SK-N-SH (cell line): ENCODE measurements at regions of chr21 and their contacts with region 1.

Region 1: DNA sequence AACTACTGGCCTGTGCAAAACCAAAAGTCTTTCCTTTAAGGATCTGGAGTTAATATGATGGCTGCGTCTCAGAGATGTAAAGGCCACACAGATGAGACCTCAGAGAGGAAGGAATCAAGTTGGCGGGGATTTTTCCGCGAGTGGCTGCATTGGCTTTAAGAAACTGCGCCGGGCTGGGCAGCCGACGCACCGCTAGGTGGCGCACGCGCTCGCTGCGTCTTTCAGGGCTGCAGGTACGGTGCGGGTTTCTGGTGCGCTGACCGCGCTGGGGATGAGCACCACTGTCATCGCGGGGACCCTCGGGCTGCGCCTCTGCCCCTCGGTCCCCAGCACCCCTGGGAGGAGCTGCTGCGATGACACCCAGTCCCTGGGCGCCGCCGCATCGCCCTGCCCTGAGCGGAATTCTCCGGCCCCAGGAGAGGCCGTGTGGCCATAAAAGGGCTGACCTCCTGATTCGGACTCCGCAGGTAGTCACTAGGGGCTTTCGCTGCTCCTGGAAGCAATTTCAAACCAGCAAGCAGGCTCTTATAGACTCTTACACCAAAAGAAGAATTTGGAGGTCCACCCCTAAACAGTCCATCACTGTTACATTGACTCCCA is 241.0 kb downstream of the KCNJ6 start:
- DNase-seq: peak; percentile 80
- H3K4me3 ChIP-seq: peak overlapping the region in 1 of 2 experiments; percentile 34; a peak in 2 of 4 replicates
- H3K27ac ChIP-seq: no peak overlapping the region
- H3K4me1 ChIP-seq: no peaks in the 10 kb centered on the region; a peak in 1 of 4 replicates
- H3K27me3 ChIP-seq: peaks cover 23% of the 10 kb centered on the region; the same call in 1 of the 2 replicates
- CTCF ChIP-seq: peak; percentile 96
- EP300 ChIP-seq: no peak
- RAD21 ChIP-seq: peak; percentile 65

Region 2: GRCh38 chr21:37686991-37687810 is 11.9 kb after region 1 on chr21:
- CTCF ChIA-PET with region 1: interaction called, 27 read pairs
- POLR2A ChIA-PET with region 1: no interaction called
- DNase-seq: no peak
- H3K4me3 ChIP-seq: no peak overlapping the region
- H3K27ac ChIP-seq: no peak overlapping the region
- H3K4me1 ChIP-seq: no peaks in the 10 kb centered on the region; a peak in 1 of 4 replicates
- H3K27me3 ChIP-seq: 0 out of 2 replicates have a peak, but pooled peaks cover 1% of the 10 kb centered on the region
- CTCF ChIP-seq: no peak
- EP300 ChIP-seq: no peak
- RAD21 ChIP-seq: no peak

Region 3: DNA sequence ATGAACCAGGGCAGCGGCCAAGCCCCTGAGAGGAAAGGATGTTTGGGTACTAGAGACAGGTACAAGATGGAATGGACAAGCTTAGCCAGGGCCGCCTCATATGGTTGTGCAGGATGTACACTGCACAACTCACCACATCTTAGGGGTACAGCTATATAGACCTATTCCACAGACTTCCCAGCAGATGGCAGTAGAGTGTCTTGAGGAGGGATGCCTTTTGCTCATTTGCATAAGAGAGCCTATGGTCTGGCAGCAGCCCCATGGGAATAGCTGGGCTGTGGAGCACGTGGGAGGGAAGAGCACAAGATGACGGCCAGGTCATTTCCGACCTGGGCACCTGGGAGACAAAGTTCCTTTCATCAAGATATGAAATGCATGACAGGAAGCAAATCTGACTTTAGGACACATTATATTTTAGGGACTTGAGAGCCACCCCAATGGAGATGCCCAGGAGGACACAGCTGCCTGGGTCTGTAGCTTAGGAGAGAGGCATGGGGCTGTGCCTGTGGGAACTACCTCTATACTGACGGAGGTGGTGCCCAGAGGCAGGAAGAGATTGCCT is 25.4 kb after region 1 on chr21:
- CTCF ChIA-PET with region 1: interaction called, 25 read pairs
- POLR2A ChIA-PET with region 1: no interaction called
- DNase-seq: peak; percentile 76
- H3K4me3 ChIP-seq: no peak overlapping the region; a peak in 1 of 4 replicates
- H3K27ac ChIP-seq: no peak overlapping the region
- H3K4me1 ChIP-seq: no peaks in the 10 kb centered on the region; a peak in 1 of 4 replicates
- H3K27me3 ChIP-seq: peaks cover 12% of the 10 kb centered on the region; the same call in 1 of the 2 replicates
- CTCF ChIP-seq: peak; percentile 71
- EP300 ChIP-seq: no peak
- RAD21 ChIP-seq: peak; percentile 67

Region 4: GRCh38 chr21:38126669-38127303 is 451.5 kb after region 1 on chr21:
- CTCF ChIA-PET with region 1: interaction called, 40 read pairs
- POLR2A ChIA-PET with region 1: no interaction called
- DNase-seq: peak; percentile 57
- H3K4me3 ChIP-seq: 0 out of 4 replicates have a peak overlapping the region, but pooled peaks of 1 of the 2 experiments have one; percentile 39
- H3K27ac ChIP-seq: no peak overlapping the region
- H3K4me1 ChIP-seq: no peaks in the 10 kb centered on the region
- H3K27me3 ChIP-seq: peaks cover 16% of the 10 kb centered on the region; the same call in 1 of the 2 replicates
- CTCF ChIP-seq: peak; percentile 78
- EP300 ChIP-seq: no peak
- RAD21 ChIP-seq: peak; percentile 74